Tibial artery (tissue), 4 donors: ENCODE measurements at regions of chr19 and their contacts with region 1.

Region 1: GRCh38 chr19:5904352-5905113 is at the start of gene VMAC:
- DNase-seq: peak; percentile 100
- H3K4me3 ChIP-seq: peak within 1 kb of the TSS; percentile 72 to 90
- H3K27ac ChIP-seq: peak within 1 kb of the TSS; percentile 86 to 88
- H3K4me1 ChIP-seq: peaks cover 0 to 35% (median 24%) of the 10 kb centered on the region in 4 donors
- H3K27me3 ChIP-seq: no peaks in the 10 kb centered on the region
- CTCF ChIP-seq: no peak

Region 2: DNA sequence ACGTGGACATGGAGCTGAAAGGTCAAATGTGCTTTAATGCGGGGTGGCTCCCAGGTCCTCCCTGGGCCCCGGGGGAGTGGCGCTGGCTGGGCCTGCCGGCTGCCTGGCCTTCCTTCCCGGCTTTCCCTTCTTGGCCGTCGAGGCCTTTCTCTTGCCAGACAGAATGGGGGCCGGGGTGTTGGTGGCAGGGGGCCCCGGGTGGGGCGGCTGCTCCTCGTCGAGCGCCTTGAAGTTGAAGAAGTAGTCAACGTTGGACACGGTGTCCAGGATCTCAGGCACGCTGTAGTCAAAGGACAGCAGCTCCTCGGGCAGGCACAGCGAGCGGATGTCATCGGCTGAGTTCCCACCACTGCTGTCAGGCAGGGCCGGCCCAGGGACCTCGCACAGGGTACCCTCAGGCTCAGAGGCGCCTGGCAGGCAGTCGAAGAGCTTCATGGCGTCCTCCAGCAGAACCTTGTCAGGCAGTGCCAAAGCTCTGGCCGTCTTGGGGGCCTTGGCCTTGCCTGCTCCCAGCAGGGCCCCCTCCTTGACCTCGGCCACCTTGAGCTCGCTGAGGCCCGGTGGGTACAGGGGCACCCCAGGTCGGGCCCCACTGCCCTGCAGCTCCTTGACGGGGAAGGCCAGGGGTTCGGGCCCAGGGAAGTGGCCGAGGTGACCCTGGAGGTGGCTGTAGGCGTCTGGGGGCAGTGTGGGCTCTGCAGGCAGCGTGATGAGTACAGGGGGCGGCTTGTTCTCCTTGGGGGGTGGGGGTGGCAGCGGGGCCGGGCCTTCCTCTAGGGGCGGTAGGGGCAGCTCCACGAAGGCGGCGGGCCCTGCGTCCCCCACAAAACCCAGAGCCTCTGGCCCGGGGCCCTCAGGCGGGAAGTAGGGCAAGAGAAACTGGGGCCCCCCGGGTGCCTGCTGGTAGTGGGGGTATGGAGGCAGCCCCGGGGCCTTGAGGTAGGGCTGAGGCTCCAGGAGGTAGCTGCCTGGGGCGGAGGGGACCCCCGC is 121.3 kb before region 1 on chr19:
- intact Hi-C with region 1: no loop called
- DNase-seq: no peak
- H3K4me3 ChIP-seq: no peak overlapping the region
- H3K27ac ChIP-seq: no peak overlapping the region
- H3K4me1 ChIP-seq: no peaks in the 10 kb centered on the region
- H3K27me3 ChIP-seq: no peaks in the 10 kb centered on the region
- CTCF ChIP-seq: no peak

Region 3: DNA sequence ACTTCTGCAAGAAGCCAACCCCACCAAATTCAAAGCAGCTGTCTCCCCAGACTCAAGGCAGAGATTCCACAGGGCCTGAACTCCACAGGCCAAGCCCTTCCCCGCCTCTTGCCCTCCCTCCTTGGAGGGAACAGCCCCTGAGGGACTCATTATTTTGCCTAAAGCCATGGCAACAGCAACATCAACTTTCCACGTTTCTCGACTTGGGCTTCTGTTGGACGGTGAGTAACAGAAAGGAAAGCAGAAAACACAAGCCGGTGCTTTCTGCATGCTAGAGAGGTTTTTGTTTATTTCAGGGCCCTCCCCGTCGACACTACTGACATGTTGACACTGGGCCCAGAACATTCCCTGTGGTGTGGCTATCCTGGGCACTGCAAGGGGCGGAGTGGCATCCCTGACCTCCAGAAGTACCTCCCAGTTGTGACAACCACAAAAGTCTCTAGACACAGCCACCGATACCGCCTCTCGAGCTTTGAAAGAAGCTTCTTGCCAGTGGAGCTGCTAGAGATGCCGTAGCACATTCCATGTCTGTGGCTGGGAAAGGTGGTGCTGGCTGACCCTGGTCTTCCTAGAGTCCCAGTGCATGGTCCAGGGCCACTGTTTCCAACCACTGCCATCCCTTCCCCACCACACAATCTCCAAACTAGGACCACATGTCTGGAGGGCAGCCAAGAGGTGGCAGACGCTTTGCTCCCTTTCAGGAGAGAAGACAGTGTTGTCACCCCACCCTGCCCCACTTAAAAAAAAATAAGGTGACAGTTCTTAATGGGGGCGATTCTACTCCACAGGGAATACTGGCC is 22.3 kb after region 1 on chr19:
- intact Hi-C with region 1: no loop called
- DNase-seq: peak; percentile 76 to 81
- H3K4me3 ChIP-seq: no peak overlapping the region
- H3K27ac ChIP-seq: peak overlapping the region; percentile 68 to 75
- H3K4me1 ChIP-seq: peaks cover 0 to 21% (median 20%) of the 10 kb centered on the region in 4 donors
- H3K27me3 ChIP-seq: no peaks in the 10 kb centered on the region
- CTCF ChIP-seq: no peak

Region 4: GRCh38 chr19:5977785-5978605 is 73.5 kb after region 1 on chr19 and contains the start of gene RANBP3:
- intact Hi-C with region 1: loop called (anchors 2 kb)
- DNase-seq: peak; percentile 99
- H3K4me3 ChIP-seq: peak within 1 kb of the TSS; percentile 64 to 78
- H3K27ac ChIP-seq: peak within 1 kb of the TSS; percentile 83 to 89
- H3K4me1 ChIP-seq: peaks cover 6 to 52% (median 37%) of the 10 kb centered on the region in 4 donors
- H3K27me3 ChIP-seq: no peaks in the 10 kb centered on the region
- CTCF ChIP-seq: no peak